MCF 10A (cell line): ENCODE measurements at regions of chr9 and their contacts with region 1.

Region 1: GRCh38 chr9:108885643-108886348 is 23.7 kb downstream of the ACTL7A start:
- DNase-seq: peak; percentile 96
- H3K4me3 Mint-ChIP-seq: no peak overlapping the region
- H3K27ac Mint-ChIP-seq: peak overlapping the region; percentile 35
- H3K4me1 Mint-ChIP-seq: peaks cover 18% of the 10 kb centered on the region
- H3K27me3 Mint-ChIP-seq: no peaks in the 10 kb centered on the region
- CTCF ChIP-seq: no peak

Region 2: DNA sequence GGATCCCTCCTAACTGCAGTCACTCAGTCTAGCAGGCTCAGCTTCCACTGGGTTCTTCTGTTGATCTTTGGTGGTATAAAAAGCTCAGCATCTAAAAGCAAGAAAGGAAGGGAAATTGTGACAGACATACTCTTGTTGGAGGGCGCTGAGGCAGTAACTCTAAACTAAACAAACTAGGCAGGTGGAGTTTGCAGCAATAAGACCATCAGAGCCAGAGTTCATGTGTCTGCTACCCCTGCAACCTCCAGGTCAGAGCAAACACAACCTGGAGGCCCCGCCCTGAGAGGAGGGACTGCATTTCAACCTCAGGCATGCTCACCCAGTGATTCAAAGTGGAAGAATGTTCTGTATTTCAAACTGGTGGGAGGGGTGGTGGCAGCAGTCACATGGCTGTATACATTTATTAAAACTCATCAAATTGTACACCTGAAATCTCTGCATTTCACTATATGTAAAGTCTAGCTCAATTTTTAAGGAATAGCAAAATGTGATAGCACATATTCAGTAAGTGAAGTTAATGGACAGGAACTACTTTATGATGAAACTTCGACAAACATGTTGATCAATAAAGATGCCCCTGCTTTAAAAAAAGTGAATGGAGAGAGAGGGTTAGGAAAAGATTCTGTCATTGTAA is 16.6 kb before region 1 on chr9:
- CTCF ChIA-PET with region 1: interaction called, 3 read pairs
- POLR2A ChIA-PET with region 1: interaction called, 11 read pairs
- intact Hi-C with region 1: no loop called
- DNase-seq: peak; percentile 57
- H3K4me3 Mint-ChIP-seq: peak overlapping the region; percentile 4
- H3K27ac Mint-ChIP-seq: peak overlapping the region; percentile 83
- H3K4me1 Mint-ChIP-seq: peaks cover 19% of the 10 kb centered on the region
- H3K27me3 Mint-ChIP-seq: no peaks in the 10 kb centered on the region
- CTCF ChIP-seq: no peak